CD4-positive, alpha-beta T cell (primary cell): ENCODE measurements at regions of chrX and their contacts with region 1.

Region 1: DNA sequence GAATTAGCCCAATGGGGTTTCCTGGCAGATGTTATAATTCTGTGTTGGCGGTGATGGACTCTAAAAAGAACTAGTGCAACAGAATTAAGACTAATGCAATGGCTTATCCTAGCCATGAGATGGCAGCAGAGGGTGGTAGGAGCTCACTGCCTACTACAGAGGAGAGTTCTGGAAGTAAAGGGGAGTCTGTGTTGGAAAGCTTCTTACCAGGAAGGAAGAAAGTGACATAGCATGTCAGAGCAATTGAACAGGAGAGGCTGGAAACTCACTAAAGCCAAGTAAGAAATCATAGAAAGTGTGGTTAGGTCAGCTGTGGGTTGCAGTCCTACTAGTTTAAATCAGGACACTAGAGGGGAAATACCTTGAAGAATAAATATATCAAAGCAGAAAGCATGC is 6.3 kb upstream of the TRPC5OS start:
- DNase-seq: peak in 4 of 14 experiments; percentile 8 to 26 (median 22)
- ATAC-seq: no peak
- H3K4me3 ChIP-seq: no peak overlapping the region
- H3K4me3 Mint-ChIP-seq: no peak overlapping the region
- H3K27ac ChIP-seq: no peak overlapping the region
- H3K27ac Mint-ChIP-seq: no peak overlapping the region
- H3K4me1 ChIP-seq: no peaks in the 10 kb centered on the region
- H3K4me1 Mint-ChIP-seq: no peaks in the 10 kb centered on the region
- H3K27me3 ChIP-seq: peaks cover 4 to 17% of the 10 kb centered on the region in 2 experiments
- H3K27me3 Mint-ChIP-seq: peaks cover 17% of the 10 kb centered on the region
- CTCF ChIP-seq: peak; percentile 47

Region 2: GRCh38 chrX:111756486-111756885 is 113.2 kb before region 1 on chrX:
- CTCF ChIA-PET with region 1: no interaction called
- POLR2A ChIA-PET with region 1: no interaction called
- intact Hi-C with region 1: no loop called
- DNase-seq: no peak
- ATAC-seq: no peak
- H3K4me3 ChIP-seq: no peak overlapping the region
- H3K4me3 Mint-ChIP-seq: no peak overlapping the region
- H3K27ac ChIP-seq: no peak overlapping the region
- H3K27ac Mint-ChIP-seq: no peak overlapping the region
- H3K4me1 ChIP-seq: no peaks in the 10 kb centered on the region
- H3K4me1 Mint-ChIP-seq: no peaks in the 10 kb centered on the region
- H3K27me3 ChIP-seq: no peaks in the 10 kb centered on the region
- H3K27me3 Mint-ChIP-seq: no peaks in the 10 kb centered on the region
- CTCF ChIP-seq: no peak

Region 3: GRCh38 chrX:112636951-112637541 is 767.4 kb after region 1 on chrX:
- CTCF ChIA-PET with region 1: no interaction called
- POLR2A ChIA-PET with region 1: no interaction called
- intact Hi-C with region 1: loop called in 1 of 2 experiments (anchors 10 kb)
- DNase-seq: no peak
- ATAC-seq: no peak
- H3K4me3 ChIP-seq: no peak overlapping the region
- H3K4me3 Mint-ChIP-seq: no peak overlapping the region
- H3K27ac ChIP-seq: no peak overlapping the region
- H3K27ac Mint-ChIP-seq: no peak overlapping the region
- H3K4me1 ChIP-seq: no peaks in the 10 kb centered on the region
- H3K4me1 Mint-ChIP-seq: no peaks in the 10 kb centered on the region
- H3K27me3 ChIP-seq: no peaks in the 10 kb centered on the region
- H3K27me3 Mint-ChIP-seq: no peaks in the 10 kb centered on the region
- CTCF ChIP-seq: no peak

Region 4: DNA sequence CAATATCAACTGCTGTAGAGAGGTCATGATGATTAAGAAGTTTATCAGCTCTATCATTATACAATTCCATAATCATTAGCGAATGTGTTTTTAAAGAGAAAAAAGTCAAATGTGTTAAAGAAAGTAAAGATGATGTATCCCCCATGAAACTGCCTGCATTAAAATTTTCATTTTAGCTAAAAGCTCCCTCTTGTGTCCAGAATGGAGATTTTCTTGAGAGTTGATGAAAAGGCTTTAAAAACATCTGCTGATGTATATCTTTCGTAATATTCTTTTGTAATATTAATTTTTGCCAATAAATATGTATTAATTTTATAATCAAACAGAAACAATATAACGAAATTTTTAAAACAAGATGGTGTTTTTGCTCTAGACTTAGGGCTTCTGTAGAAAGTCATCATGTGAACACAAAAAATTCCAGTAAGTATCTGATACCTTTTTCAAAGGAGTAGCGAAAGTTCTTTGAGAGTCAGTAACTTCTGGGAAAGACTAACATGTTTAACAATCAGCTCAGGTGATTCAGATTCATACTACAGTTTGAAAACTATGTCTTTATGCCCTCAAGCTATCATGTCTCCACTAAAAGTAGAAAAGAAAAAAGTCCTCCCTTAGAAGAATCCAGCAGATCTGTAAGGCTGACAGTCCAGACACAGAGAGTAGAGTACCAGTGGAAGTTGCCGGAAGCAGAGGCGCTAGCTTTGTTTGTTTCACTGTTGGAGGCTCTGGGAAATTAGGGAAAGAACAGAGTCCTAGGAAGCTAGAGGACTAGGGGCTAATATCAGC is 862.3 kb after region 1 on chrX:
- CTCF ChIA-PET with region 1: no interaction called
- POLR2A ChIA-PET with region 1: no interaction called
- intact Hi-C with region 1: loop called in 1 of 2 experiments (anchors 5 kb)
- DNase-seq: peak in 1 of 14 experiments; percentile 2
- ATAC-seq: no peak
- H3K4me3 ChIP-seq: no peak overlapping the region
- H3K4me3 Mint-ChIP-seq: no peak overlapping the region
- H3K27ac ChIP-seq: no peak overlapping the region
- H3K27ac Mint-ChIP-seq: no peak overlapping the region
- H3K4me1 ChIP-seq: no peaks in the 10 kb centered on the region
- H3K4me1 Mint-ChIP-seq: peaks cover 5% of the 10 kb centered on the region
- H3K27me3 ChIP-seq: no peaks in the 10 kb centered on the region
- H3K27me3 Mint-ChIP-seq: peaks cover 6% of the 10 kb centered on the region
- CTCF ChIP-seq: no peak